ENCODE measurements at regions of chr1 and their contacts with region 1.

Region 1: GRCh38 chr1:169586395-169587255 is at the start of gene F5:
- DNase-seq: peak; percentile 94
- H3K4me3 Mint-ChIP-seq: peak within 1 kb of the TSS; percentile 94
- H3K27ac Mint-ChIP-seq: peak within 1 kb of the TSS; percentile 97
- H3K4me1 Mint-ChIP-seq: peaks cover 60% of the 10 kb centered on the region
- H3K27me3 Mint-ChIP-seq: no peaks in the 10 kb centered on the region
- total RNA-seq, gene F5: 58.6 to 59.1 TPM

Region 2: DNA sequence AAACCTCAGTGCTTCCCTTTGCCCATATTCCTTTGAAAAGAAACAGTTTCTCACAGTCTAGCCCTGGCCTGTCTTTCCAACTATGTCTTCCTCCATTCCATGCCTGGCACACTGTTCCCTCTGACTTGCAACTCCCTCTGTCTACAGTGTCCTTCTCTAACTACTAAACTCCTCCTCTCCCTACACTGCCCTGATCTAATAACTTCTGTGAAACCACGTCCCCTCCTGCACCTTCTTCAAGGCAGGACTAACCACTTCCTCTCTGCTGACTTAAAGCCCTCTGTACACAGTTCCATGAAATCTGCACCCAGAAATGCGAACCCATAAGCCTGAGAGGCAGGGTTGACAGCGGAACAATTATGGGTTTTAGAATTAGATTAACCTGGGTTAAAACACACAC is 542.3 kb before region 1 on chr1:
- CTCF ChIA-PET with region 1: no interaction called
- intact Hi-C with region 1: loop called (anchors 5 kb)
- DNase-seq: peak; percentile 68
- H3K4me3 Mint-ChIP-seq: no peak overlapping the region
- H3K27ac Mint-ChIP-seq: peak overlapping the region; percentile 66
- H3K4me1 Mint-ChIP-seq: peaks cover 63% of the 10 kb centered on the region
- H3K27me3 Mint-ChIP-seq: no peaks in the 10 kb centered on the region

Region 3: DNA sequence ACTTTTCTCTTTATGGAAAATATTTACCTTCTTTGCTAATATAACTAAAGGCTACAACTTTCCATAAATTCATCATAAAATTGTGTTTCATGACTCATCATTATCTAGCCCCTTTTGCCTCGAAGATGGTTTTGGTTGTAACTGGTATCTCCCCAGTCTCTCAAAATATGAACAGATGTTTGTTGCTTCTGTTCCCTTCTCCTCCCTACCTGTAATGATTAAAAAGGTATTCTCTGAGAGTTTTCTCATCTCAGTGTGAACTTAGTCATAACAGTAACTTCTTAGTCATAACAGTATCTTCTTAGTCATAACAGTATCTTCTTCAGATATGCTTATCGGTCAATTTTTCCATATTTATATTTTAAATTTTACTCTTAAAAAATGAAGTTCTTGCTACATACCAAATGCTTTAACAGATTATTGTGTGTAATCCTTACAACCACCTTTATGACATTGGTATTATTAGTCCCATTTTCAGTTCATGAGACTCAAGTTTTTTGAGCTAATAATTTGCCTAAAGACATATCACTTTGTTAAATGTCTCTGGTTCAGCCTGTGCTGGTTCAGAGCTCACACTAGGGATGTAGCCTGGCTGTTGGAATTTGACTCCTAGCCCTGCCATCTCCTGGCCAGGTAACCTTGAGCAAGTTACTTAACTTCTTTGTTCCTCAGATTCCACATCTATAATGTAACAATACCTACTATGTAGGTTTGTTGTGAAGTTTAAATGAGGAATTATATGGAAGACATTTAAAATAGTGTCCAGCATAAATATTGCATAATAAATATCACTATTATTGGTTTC is 447.6 kb before region 1 on chr1:
- CTCF ChIA-PET with region 1: no interaction called
- intact Hi-C with region 1: loop called (anchors 5 kb)
- DNase-seq: no peak
- H3K4me3 Mint-ChIP-seq: no peak overlapping the region
- H3K27ac Mint-ChIP-seq: peak overlapping the region; percentile 50
- H3K4me1 Mint-ChIP-seq: peaks cover 6% of the 10 kb centered on the region
- H3K27me3 Mint-ChIP-seq: no peaks in the 10 kb centered on the region

Region 4: GRCh38 chr1:169630006-169630405 is 43.4 kb after region 1 on chr1 and contains the start of gene SELP:
- CTCF ChIA-PET with region 1: interaction called, 5 read pairs
- intact Hi-C with region 1: loop called (anchors 1 kb)
- DNase-seq: no peak
- H3K4me3 Mint-ChIP-seq: no peak within 1 kb of the TSS
- H3K27ac Mint-ChIP-seq: peak within 1 kb of the TSS; percentile 47
- H3K4me1 Mint-ChIP-seq: peaks cover 65% of the 10 kb centered on the region
- H3K27me3 Mint-ChIP-seq: no peaks in the 10 kb centered on the region
- total RNA-seq, gene SELP: 2.4 to 2.6 TPM

Region 5: DNA sequence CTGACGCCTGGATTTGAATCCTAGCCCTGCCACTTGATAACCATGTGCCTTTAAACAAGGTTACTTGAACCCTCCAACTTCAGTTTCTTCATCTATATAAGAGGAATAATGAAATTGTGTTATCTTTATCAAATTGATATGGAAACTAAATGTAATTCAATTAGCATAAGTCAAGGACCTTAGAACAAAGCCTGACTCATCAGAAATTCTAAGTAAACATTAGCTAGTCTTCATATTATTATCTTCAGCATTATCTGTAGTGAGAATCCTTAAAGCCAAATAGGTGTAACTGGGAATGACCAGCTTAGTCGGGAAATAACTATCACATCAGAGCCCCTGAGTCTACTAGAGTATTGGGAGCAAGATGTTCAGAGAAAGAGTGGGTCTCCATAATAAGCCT is 118.2 kb after region 1 on chr1:
- CTCF ChIA-PET with region 1: interaction called, 19 read pairs
- intact Hi-C with region 1: no loop called
- DNase-seq: no peak
- H3K4me3 Mint-ChIP-seq: peak overlapping the region; percentile 76
- H3K27ac Mint-ChIP-seq: peak overlapping the region; percentile 94
- H3K4me1 Mint-ChIP-seq: peaks cover 72% of the 10 kb centered on the region
- H3K27me3 Mint-ChIP-seq: no peaks in the 10 kb centered on the region

Region 6: DNA sequence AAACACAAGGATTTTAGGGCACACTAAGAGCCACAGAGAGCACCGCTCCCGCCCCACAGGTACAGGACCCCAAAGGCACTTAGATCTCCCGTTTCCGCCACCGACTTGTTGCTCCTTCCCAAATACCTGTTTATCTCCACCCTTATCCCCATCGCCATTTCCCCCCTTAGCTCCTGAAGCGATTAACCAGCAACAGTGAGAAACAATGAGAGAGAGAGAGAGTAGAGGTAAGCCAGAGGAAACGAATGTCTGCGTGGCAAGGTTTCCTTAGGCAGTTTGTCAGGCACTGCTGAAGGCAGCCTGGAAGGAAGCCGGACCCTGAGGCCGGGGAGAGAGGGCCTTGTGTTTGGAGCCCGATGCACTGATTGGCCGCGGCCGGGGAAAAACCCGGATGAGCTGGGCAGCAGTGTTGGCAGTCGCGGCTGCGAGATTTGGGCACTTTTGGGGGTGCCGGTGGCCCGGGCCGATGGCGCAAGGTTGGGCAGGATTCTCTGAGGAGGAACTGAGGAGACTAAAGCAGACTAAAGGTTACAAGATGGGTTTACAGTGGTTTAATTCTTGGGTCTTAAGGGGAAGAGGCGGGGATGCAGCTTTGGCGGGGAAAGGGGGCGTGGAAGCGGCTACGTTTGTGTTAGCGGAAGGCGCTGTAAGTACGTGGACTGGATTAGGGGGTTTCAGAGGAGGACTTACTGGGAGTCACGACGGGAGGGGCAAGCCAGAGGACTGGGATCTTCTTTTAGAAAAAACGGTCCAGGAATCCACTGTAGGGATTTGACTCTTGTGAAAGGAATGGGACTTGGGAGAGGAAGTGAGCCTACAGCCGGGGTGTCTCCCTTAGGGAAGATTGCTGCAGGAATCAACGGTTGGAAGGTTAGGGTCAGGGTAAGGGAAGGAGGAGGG is 945.4 kb after region 1 on chr1 and contains the start of gene GORAB:
- CTCF ChIA-PET with region 1: no interaction called
- intact Hi-C with region 1: loop called (anchors 10 kb)
- DNase-seq: peak; percentile 93
- H3K4me3 Mint-ChIP-seq: no peak within 1 kb of the TSS
- H3K27ac Mint-ChIP-seq: no peak within 1 kb of the TSS
- H3K4me1 Mint-ChIP-seq: peaks cover 13% of the 10 kb centered on the region
- H3K27me3 Mint-ChIP-seq: no peaks in the 10 kb centered on the region
- total RNA-seq, gene GORAB: 9.5 TPM

Region 7: GRCh38 chr1:170776777-170777176 is 1190.2 kb after region 1 on chr1:
- CTCF ChIA-PET with region 1: no interaction called
- intact Hi-C with region 1: no loop called
- DNase-seq: no peak
- H3K4me3 Mint-ChIP-seq: no peak overlapping the region
- H3K27ac Mint-ChIP-seq: no peak overlapping the region
- H3K4me1 Mint-ChIP-seq: no peaks in the 10 kb centered on the region
- H3K27me3 Mint-ChIP-seq: no peaks in the 10 kb centered on the region

Measured in activated naive CD4-positive, alpha-beta T cell treated with anti-CD3 and anti-CD28 coated beads for 36 hours (primary cell).